ENCODE measurements at regions of chr19 and their contacts with region 1.

Region 1: GRCh38 chr19:14081325-14082093 is 4.1 kb downstream of the C19orf67 start:
- H3K4me3 Mint-ChIP-seq: peak overlapping the region; percentile 93
- H3K27ac Mint-ChIP-seq: peak overlapping the region; percentile 93
- H3K4me1 Mint-ChIP-seq: peaks cover 33% of the 10 kb centered on the region
- H3K27me3 Mint-ChIP-seq: no peaks in the 10 kb centered on the region

Region 2: GRCh38 chr19:13794757-13795589 is 286.5 kb before region 1 on chr19 and contains the start of gene ZSWIM4:
- intact Hi-C with region 1: loop called (anchors 5 kb)
- H3K4me3 Mint-ChIP-seq: peak within 1 kb of the TSS; percentile 100
- H3K27ac Mint-ChIP-seq: peak within 1 kb of the TSS; percentile 96
- H3K4me1 Mint-ChIP-seq: peaks cover 47% of the 10 kb centered on the region
- H3K27me3 Mint-ChIP-seq: no peaks in the 10 kb centered on the region

Region 3: GRCh38 chr19:14059093-14059480 is 22.4 kb before region 1 on chr19:
- intact Hi-C with region 1: no loop called
- H3K4me3 Mint-ChIP-seq: no peak overlapping the region
- H3K27ac Mint-ChIP-seq: no peak overlapping the region
- H3K4me1 Mint-ChIP-seq: peaks cover 25% of the 10 kb centered on the region
- H3K27me3 Mint-ChIP-seq: peaks cover 71% of the 10 kb centered on the region

Region 4: GRCh38 chr19:14097532-14098151 is 16.1 kb after region 1 on chr19:
- intact Hi-C with region 1: no loop called
- H3K4me3 Mint-ChIP-seq: no peak overlapping the region
- H3K27ac Mint-ChIP-seq: peak overlapping the region; percentile 8
- H3K4me1 Mint-ChIP-seq: no peaks in the 10 kb centered on the region
- H3K27me3 Mint-ChIP-seq: no peaks in the 10 kb centered on the region

Region 5: GRCh38 chr19:14117668-14118164 is 36.2 kb after region 1 on chr19 and contains the start of gene PRKACA:
- intact Hi-C with region 1: loop called (anchors 5 kb)
- H3K4me3 Mint-ChIP-seq: peak within 1 kb of the TSS; percentile 92
- H3K27ac Mint-ChIP-seq: peak within 1 kb of the TSS; percentile 93
- H3K4me1 Mint-ChIP-seq: peaks cover 68% of the 10 kb centered on the region
- H3K27me3 Mint-ChIP-seq: no peaks in the 10 kb centered on the region

Region 6: DNA sequence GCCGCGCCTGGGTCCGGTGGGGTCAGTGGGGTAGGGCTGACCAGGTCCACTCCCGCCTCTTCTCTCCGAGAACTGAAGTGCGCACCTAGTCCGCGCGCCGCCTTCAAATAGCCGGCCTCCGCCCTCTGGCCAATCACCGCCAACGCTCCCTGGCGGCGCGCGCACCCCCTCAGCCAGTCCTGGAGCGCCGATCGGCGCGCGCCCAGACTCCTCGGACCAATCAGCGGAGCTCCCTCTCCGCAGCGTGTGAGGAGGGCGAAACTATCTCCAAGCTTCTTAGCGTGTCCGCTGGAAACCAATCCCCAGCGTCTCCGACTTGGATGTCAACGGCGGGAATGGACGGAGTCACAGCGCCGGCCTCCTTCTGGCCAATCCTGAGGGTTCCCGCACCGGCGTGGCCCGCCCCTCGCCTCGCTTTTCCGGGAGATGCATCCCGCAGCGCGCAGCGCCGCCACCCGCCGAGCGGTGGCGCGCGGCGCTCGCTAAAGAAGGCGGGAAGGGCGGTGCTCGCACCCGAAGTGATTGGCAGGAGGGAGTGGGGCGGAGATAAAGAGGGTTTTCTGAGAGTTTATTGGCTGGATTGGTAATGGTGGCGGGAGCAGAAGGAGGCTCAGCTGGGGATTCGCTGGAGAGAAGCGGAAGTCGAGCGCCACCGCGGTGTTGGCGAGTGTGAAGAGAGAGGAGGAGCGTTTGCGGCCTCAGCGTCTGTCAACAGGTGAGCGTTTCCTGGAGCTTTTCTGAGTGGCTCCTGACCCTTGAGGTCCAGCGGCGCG is 55.2 kb after region 1 on chr19 and contains the start of gene ASF1B:
- intact Hi-C with region 1: loop called (anchors 2 kb)
- H3K4me3 Mint-ChIP-seq: peak within 1 kb of the TSS; percentile 86
- H3K27ac Mint-ChIP-seq: peak within 1 kb of the TSS; percentile 88
- H3K4me1 Mint-ChIP-seq: peaks cover 34% of the 10 kb centered on the region
- H3K27me3 Mint-ChIP-seq: no peaks in the 10 kb centered on the region

Measured in dendritic cell treated with granulocyte-macrophage colony-stimulating factor and Interleukin-4, amounts not matched to agents 40 ng/mL and 50 ng/mL, for 4 days (primary cell).